Caco-2 (cell line): ENCODE measurements at regions of chr9 and their contacts with region 1.

Region 1: GRCh38 chr9:138007911-138008841 is 130.6 kb downstream of the CACNA1B start:
- DNase-seq: peak in 1 of 2 experiments; percentile 28
- H3K4me3 ChIP-seq: no peak overlapping the region
- H3K4me3 Mint-ChIP-seq: no peak overlapping the region
- H3K27ac Mint-ChIP-seq: no peak overlapping the region
- H3K4me1 ChIP-seq: no peaks in the 10 kb centered on the region
- H3K4me1 Mint-ChIP-seq: no peaks in the 10 kb centered on the region
- H3K27me3 ChIP-seq: no peaks in the 10 kb centered on the region; the same call in 1 of the 2 replicates
- H3K27me3 Mint-ChIP-seq: peaks cover 20% of the 10 kb centered on the region
- CTCF ChIP-seq: no peak

Region 2: DNA sequence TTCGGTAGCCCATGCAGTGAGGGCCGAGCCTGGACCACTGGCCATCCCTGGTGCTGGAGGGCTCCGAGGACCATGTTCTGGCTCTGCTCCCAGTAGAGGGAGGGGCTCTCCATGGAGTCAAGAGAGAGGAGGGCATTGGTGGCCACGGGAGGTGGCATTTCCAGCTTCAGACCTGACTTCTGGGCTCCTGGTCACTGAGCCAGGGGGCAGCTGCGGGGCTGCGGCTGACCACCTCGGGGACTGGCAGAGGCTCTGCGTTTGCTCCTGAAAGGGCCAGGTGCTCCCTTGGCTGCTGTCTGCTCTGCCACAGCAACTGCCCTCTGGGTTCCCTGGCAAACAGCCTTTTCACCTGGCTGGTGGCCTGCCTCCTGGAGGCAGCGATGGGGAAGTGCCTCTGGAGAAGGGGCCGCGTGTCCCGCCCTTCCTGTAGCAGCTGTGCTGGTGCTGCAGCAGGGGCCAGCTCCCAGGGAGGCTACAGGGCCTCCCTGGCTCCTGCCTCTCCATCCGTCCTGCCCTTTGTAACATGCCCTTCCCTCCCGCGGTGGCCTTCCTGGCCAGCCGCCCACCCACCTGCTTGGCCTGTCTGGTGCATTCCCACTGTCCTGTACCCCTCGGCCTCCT is 14.1 kb after region 1 on chr9:
- CTCF ChIA-PET with region 1: no interaction called
- POLR2A ChIA-PET with region 1: no interaction called
- intact Hi-C with region 1: no loop called
- DNase-seq: peak; percentile 24 to 37
- H3K4me3 ChIP-seq: no peak overlapping the region
- H3K4me3 Mint-ChIP-seq: peak overlapping the region; percentile 50
- H3K27ac Mint-ChIP-seq: no peak overlapping the region
- H3K4me1 ChIP-seq: peaks cover 4% of the 10 kb centered on the region; the same call in 1 of the 2 replicates
- H3K4me1 Mint-ChIP-seq: no peaks in the 10 kb centered on the region
- H3K27me3 ChIP-seq: peaks cover 1% of the 10 kb centered on the region
- H3K27me3 Mint-ChIP-seq: peaks cover 6% of the 10 kb centered on the region
- CTCF ChIP-seq: peak in 1 of 2 experiments; percentile 25

Region 3: DNA sequence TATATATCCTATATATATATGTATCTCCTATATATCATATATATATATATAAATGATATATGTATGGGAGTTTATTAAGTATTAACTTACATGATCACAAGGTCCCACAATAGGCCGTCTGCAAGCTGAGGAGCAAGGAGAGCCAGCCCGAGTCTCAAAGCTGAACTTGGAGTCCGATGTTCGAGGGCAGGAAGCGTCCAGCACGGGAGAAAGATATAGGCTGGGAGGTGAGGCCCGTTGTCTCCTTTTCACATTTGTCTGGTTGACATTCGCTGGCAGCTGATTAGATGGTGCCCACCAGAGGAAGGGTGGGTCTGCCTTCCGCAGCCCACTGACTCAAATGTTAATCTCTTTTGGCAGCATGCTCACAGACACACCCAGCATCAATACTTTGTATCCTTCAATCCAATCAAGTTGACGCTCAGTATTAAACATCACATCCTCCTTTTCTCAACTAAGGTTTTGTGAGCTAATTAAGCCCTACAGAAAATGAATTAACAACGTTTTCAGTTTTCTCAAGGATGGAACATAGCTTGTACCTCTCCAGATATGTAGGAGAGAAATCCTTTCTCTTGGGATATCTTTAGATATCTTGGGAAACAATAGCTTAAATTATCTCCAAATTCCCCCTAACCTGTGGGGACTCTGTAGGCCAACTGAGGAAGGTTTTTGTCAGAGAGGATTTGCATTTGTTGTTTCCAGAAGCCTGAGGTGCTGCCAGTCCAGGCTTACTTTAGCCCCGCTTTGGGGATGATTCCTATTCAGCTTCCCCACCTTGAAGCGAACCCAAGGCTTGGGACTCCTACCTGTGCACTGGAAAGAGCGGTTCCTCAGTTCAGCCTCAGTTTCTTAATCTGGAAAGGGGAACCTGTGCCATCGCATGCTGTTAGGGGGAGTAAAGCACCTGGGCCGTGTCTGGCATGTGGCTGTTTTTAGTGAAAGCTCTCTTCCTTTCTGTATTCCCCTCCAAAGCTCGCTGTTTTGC is 32.6 kb after region 1 on chr9:
- CTCF ChIA-PET with region 1: no interaction called
- POLR2A ChIA-PET with region 1: no interaction called
- intact Hi-C with region 1: loop called (anchors 1 kb)
- DNase-seq: no peak
- H3K4me3 ChIP-seq: no peak overlapping the region
- H3K4me3 Mint-ChIP-seq: no peak overlapping the region
- H3K27ac Mint-ChIP-seq: no peak overlapping the region
- H3K4me1 ChIP-seq: no peaks in the 10 kb centered on the region
- H3K4me1 Mint-ChIP-seq: no peaks in the 10 kb centered on the region
- H3K27me3 ChIP-seq: no peaks in the 10 kb centered on the region; the same call in 1 of the 2 replicates
- H3K27me3 Mint-ChIP-seq: peaks cover 30% of the 10 kb centered on the region
- CTCF ChIP-seq: no peak

Region 4: DNA sequence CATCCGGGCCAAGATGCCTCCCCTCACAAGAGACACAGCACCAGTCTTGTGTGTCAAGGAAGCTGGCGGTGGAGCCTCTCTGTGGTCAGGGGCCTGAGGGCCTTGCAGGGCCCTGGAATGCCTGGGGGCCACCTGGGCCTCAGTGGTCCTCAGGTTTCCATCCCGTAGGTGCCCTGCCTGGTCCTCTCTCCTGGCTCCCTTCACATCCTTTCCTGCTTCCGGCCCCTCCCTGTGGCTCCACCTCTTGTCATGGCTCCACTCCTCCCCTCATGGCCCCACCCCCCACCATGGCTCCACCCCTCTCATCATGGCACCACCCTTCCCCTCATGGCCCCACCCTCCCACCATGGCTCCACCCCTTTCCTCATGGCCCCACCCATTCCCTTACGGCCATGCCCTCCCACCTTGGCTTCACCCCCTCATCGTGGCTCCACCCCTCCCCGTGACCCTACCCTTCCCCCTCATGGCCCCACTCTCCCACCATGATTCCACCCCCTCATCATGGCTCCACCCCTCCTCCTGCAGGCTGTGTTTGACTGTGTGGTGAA is 45.2 kb after region 1 on chr9:
- CTCF ChIA-PET with region 1: no interaction called
- POLR2A ChIA-PET with region 1: no interaction called
- intact Hi-C with region 1: no loop called
- DNase-seq: no peak
- H3K4me3 ChIP-seq: no peak overlapping the region
- H3K4me3 Mint-ChIP-seq: no peak overlapping the region
- H3K27ac Mint-ChIP-seq: no peak overlapping the region
- H3K4me1 ChIP-seq: no peaks in the 10 kb centered on the region
- H3K4me1 Mint-ChIP-seq: no peaks in the 10 kb centered on the region
- H3K27me3 ChIP-seq: no peaks in the 10 kb centered on the region
- H3K27me3 Mint-ChIP-seq: peaks cover 6% of the 10 kb centered on the region
- CTCF ChIP-seq: no peak